Right ventricle myocardium inferior (tissue), 1 donor: ENCODE measurements at regions of chr11 and their contacts with region 1.

Region 1: GRCh38 chr11:47631473-47631872 is 10.9 kb downstream of the MTCH2 start:
- DNase-seq: no peak
- ATAC-seq: no peak

Region 2: DNA sequence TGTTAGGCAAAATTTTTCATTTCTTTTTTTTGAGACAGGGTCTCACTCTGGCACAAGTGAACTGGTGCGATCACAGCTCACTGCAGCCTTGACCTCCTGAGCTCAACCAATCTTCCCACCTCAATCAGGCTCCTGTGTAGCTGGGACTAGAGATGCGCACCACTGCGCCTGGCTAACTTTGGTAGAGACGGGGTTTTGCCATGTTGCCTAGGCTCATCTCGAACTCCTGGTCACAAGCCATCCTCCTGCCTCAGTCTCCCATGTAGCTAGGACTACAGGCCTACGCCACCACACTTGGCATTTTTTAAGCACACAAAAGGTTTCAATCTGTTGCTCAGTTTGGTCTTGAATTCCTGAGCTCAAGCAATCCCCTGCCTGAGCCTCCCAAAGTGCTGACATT is 126.6 kb after region 1 on chr11:
- intact Hi-C with region 1: loop called (anchors 10 kb)
- DNase-seq: no peak
- ATAC-seq: no peak